ENCODE measurements at regions of chr10 and their contacts with region 1.

Region 1: DNA sequence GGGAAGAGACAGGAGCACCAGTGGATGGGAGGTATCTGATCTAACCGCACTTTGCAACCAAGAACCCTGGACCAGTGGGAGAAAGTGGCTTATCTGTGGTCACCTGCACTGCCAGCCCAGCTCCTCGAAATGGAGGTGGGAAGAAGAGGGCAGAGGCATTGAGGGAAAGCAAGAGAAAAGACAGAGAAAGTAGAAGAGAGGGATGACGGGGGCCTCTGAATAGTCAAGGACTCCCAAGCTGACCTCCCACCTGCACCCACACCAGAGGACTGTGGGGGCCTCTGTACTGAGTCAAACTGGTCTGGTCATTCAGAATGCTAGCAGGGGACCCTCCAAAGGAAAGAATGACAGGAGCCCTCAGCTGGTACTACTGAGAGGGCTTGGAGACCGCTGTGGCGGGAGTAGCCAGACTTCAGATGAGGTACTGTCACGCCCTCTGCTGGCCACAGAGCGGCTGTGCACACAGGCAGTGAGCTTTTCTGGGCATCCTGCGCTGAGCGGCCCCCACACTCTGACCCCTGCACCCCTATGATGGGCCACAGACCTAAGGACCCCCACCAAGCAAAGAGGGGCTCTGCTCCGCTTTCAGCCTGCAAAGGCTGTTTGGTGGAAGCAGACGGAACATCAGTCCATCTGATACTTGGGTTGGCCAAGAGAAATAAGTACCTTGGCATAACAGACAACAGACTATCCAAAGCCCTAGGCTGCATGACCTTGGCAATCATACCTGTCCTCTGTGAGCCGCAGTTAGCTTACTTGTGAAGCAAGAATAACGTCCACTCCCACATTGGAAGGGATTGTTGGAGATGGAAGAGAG is 112.9 kb downstream of the COL13A1 start:
- DNase-seq: peak; percentile 27 to 93
- H3K4me3 ChIP-seq: no peak overlapping the region
- H3K27ac ChIP-seq: no peak overlapping the region
- H3K4me1 ChIP-seq: peaks cover 0 to 5% (median 2%) of the 10 kb centered on the region in 4 experiments; a peak in 4 of 7 replicates
- H3K27me3 ChIP-seq: peaks cover 0 to 3% (median 0%) of the 10 kb centered on the region in 4 experiments; a peak in 2 of 7 replicates
- CTCF ChIP-seq: peak; percentile 96 to 99 (median 96)
- EP300 ChIP-seq: no peak
- POLR2A ChIP-seq: no peak
- RAD21 ChIP-seq: peak; percentile 96 to 97

Region 2: DNA sequence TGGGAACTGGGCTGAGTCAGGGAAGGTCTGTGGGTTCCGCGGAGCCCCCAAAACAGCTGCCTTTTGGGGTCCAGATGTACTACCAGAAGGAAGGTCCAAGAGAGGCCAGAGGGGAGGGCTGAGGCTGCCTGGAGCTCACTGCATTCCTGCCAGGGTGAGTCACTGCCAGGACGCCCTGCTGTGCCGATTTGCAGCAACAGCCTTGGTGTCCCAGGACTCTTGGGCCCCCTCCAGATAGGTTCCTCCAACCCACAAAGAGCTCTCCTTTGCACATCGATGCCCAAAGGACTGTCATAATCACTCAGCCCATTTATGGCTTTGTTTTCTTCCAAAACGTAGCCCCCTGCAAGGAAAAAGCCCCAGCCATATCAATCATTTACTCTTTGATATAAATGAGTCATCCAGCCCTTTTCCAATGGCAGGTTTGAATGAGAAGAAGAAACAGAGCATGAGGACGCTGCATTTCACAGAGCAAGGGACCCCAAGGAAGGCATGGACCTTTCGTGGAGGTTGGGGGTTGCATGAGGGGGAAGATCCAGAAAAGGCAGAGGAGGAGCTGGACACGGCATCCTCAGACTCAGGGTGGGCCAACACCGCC is 145.1 kb before region 1 on chr10:
- CTCF ChIA-PET with region 1: interaction called, 19 read pairs
- POLR2A ChIA-PET with region 1: no interaction called
- DNase-seq: peak; percentile 34 to 65
- H3K4me3 ChIP-seq: no peak overlapping the region
- H3K27ac ChIP-seq: no peak overlapping the region
- H3K4me1 ChIP-seq: peaks cover 0 to 11% (median 3%) of the 10 kb centered on the region in 4 experiments; a peak in 4 of 7 replicates
- H3K27me3 ChIP-seq: peaks cover 0 to 5% (median 0%) of the 10 kb centered on the region in 4 experiments; a peak in 1 of 7 replicates
- CTCF ChIP-seq: no peak
- EP300 ChIP-seq: no peak
- POLR2A ChIP-seq: no peak
- RAD21 ChIP-seq: no peak

Region 3: GRCh38 chr10:69831231-69831855 is 83.3 kb before region 1 on chr10:
- CTCF ChIA-PET with region 1: interaction called, 36 read pairs
- POLR2A ChIA-PET with region 1: no interaction called
- DNase-seq: no peak
- H3K4me3 ChIP-seq: no peak overlapping the region
- H3K27ac ChIP-seq: no peak overlapping the region
- H3K4me1 ChIP-seq: peaks cover 2 to 19% (median 10%) of the 10 kb centered on the region in 4 experiments; a peak in 5 of 7 replicates
- H3K27me3 ChIP-seq: no peaks in the 10 kb centered on the region
- CTCF ChIP-seq: no peak
- EP300 ChIP-seq: no peak
- POLR2A ChIP-seq: no peak
- RAD21 ChIP-seq: no peak

Region 4: DNA sequence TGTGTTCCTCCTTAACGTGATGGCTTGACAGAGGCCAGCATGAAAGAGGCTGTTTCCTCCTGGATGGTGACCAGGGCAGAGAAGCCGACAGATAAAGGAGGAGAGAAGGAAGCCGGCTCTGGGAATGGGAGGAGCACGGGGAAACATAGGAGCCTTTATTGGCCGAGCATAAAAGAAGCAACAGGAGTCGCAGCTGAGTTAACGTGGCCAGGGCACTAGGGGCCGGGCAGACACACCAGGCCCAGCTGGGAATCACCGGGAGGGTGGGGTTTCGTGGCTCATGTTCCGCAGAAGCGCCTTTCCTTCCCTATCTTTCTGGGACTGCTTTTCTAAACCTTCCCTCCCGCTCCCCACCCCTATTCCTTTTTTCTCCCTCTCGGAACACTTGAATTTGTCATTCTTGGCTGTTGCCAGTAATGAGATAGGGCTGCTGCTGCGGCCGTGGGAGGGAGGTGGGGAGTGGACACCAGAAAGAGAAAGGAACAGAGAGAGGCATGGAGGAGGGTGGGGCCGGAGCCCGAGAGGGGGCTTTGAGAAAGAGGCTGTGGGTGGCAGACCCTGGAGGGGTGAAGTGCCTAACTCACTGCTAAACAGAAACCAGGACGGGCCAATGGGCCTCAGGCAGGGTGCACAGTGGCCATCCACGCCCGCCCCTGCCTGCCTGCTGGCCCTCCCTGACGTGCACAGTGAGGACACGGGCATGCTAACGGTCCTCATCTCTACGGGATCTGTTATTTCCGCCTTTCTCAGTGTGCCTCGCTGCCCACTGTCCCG is 47.7 kb before region 1 on chr10:
- CTCF ChIA-PET with region 1: interaction called, 170 read pairs
- POLR2A ChIA-PET with region 1: interaction called, 4 read pairs
- DNase-seq: peak in 1 of 2 experiments; percentile 73
- H3K4me3 ChIP-seq: peak overlapping the region in 1 of 4 experiments; percentile 19; a peak in 1 of 8 replicates
- H3K27ac ChIP-seq: peak overlapping the region; percentile 58; the same call in 1 of the 2 replicates
- H3K4me1 ChIP-seq: peaks cover 13 to 57% (median 40%) of the 10 kb centered on the region in 4 experiments
- H3K27me3 ChIP-seq: no peaks in the 10 kb centered on the region; a peak in 1 of 7 replicates
- CTCF ChIP-seq: no peak
- EP300 ChIP-seq: no peak
- POLR2A ChIP-seq: peak in 1 of 2 experiments; percentile 11; a peak in 1 of 3 replicates
- RAD21 ChIP-seq: no peak

Region 5: DNA sequence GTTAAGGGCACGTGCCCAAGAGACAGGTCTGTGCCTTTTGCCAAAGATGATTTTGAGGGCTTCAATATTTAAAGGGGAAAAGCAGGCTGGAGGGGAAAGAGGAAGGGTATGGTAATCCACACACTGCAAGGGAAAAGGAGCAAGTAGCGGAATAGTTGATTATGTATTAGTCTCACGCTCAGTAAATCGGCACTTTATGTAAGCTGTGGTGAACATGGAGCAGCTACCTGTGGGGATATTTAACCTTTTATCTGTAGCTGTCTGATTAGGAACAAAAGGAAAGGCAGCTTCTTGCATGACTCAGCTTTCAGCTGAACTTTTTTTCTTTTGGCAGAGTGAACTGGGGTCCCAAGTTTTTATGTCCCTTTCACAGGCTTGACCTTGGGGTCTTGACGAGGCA is 10.5 kb after region 1 on chr10:
- CTCF ChIA-PET with region 1: interaction called, 65 read pairs
- POLR2A ChIA-PET with region 1: no interaction called
- DNase-seq: no peak
- H3K4me3 ChIP-seq: no peak overlapping the region
- H3K27ac ChIP-seq: no peak overlapping the region
- H3K4me1 ChIP-seq: peaks cover 0 to 13% (median 4%) of the 10 kb centered on the region in 4 experiments; a peak in 4 of 7 replicates
- H3K27me3 ChIP-seq: no peaks in the 10 kb centered on the region
- CTCF ChIP-seq: no peak
- EP300 ChIP-seq: no peak
- POLR2A ChIP-seq: no peak
- RAD21 ChIP-seq: no peak

Region 6: GRCh38 chr10:69968830-69969229 is 54.2 kb after region 1 on chr10:
- CTCF ChIA-PET with region 1: interaction called, 12 read pairs
- POLR2A ChIA-PET with region 1: no interaction called
- DNase-seq: peak in 1 of 2 experiments; percentile 45
- H3K4me3 ChIP-seq: no peak overlapping the region
- H3K27ac ChIP-seq: no peak overlapping the region
- H3K4me1 ChIP-seq: peaks cover 0 to 4% (median 0%) of the 10 kb centered on the region in 4 experiments; a peak in 2 of 7 replicates
- H3K27me3 ChIP-seq: peaks cover 0 to 5% (median 0%) of the 10 kb centered on the region in 4 experiments; a peak in 1 of 7 replicates
- CTCF ChIP-seq: peak; percentile 72 to 82 (median 81)
- EP300 ChIP-seq: no peak
- POLR2A ChIP-seq: no peak
- RAD21 ChIP-seq: peak; percentile 90 to 93

Region 7: GRCh38 chr10:70403483-70404035 is 489.0 kb after region 1 on chr10:
- CTCF ChIA-PET with region 1: no interaction called
- POLR2A ChIA-PET with region 1: no interaction called
- DNase-seq: no peak
- H3K4me3 ChIP-seq: peak overlapping the region in 3 of 4 experiments; percentile 75 to 82 (median 80); a peak in 6 of 8 replicates
- H3K27ac ChIP-seq: no peak overlapping the region
- H3K4me1 ChIP-seq: peaks cover 0 to 7% (median 5%) of the 10 kb centered on the region in 4 experiments; a peak in 6 of 7 replicates
- H3K27me3 ChIP-seq: no peaks in the 10 kb centered on the region
- CTCF ChIP-seq: no peak
- EP300 ChIP-seq: no peak
- POLR2A ChIP-seq: no peak
- RAD21 ChIP-seq: no peak

Measured in H1 (cell line).